Activated CD8-positive, alpha-beta T cell treated with anti-CD3 and anti-CD28 coated beads, Interleukin-2, amount 10 ng/mL, durations not matched to agents 7 days and 5 days (primary cell): ENCODE measurements at regions of chr10 and their contacts with region 1.

Region 1: DNA sequence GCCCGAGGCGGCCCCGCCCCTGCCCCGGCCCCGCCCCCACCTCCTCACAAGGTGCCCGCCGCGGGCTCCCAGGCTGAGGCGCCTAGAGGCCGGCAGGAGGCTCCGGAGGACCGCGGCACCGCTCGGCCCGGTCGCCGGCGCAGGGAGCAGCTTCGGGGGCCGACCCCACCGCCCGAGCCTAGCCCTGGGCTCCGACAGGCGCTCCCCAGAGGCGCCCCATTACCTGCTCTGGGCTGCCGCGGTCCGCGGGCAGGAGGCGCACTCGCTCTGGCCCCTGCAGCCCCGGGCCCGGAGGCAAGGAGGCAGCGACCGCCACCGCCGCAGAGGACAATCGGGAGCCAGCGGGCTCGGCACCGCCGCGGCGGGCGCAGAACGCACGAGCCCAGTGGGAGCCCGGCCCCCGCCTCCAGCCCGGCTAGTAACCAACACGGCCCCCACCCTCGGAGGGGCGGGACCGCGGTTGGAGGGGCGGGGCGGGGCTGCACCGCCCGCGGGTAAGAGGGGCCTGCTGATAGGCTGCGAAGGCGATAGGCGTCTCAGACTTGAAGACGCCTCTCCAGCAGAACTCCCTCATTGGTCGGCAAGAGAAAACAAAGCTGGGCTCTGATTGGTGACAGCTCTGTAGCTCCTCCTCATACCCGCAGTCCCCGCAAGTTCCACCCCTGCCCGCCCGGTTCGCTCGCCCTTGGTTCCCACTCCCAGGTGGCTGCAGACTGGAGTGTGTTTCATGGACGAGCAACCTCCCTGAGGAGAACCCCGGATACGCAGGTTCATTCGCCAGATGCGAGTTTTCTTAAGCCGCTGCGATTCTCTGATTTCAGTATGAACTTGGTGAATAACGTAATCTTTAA is at the start of gene MPP7:
- DNase-seq: peak; percentile 96
- ATAC-seq: peak; percentile 98
- H3K4me3 Mint-ChIP-seq: peak within 1 kb of the TSS; percentile 81
- H3K27ac Mint-ChIP-seq: peak within 1 kb of the TSS; percentile 69
- H3K4me1 Mint-ChIP-seq: peaks cover 40% of the 10 kb centered on the region
- H3K27me3 Mint-ChIP-seq: peaks cover 15% of the 10 kb centered on the region
- total RNA-seq, gene MPP7: 13.0 to 13.5 TPM

Region 2: DNA sequence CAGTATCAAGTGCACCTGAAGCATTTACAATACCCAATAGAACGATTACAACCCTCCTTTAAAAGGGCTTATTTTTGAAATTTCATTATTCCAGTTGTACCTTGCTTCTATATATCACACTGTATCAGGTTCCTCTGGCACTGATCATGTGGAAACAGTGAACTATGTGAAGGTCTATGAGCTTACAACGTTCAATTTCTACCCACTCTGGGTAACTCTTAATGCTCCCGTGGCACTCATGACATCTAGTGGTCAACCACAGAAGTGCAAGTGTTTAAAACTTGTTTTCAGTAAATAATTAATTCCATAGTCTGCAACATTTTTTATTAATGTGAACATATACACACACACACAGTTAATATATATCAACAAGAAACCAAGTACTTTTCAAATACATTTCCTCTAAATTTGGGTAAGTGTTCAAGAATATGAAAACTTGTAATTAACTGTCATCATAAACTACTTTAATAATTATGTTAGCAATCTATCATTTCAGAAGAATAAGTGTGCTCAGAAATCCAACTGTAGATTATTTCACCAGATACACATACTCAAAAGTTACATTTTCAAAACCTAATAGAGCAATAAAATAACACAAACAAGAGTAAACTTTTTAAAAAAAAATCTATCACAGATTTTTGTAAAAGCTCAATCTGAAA is 61.0 kb before region 1 on chr10:
- CTCF ChIA-PET with region 1: interaction called, 17 read pairs
- POLR2A ChIA-PET with region 1: no interaction called
- DNase-seq: peak; percentile 60
- ATAC-seq: peak; percentile 57
- H3K4me3 Mint-ChIP-seq: no peak overlapping the region
- H3K27ac Mint-ChIP-seq: no peak overlapping the region
- H3K4me1 Mint-ChIP-seq: peaks cover 11% of the 10 kb centered on the region
- H3K27me3 Mint-ChIP-seq: no peaks in the 10 kb centered on the region

Region 3: GRCh38 chr10:28291881-28292297 is 11.0 kb before region 1 on chr10:
- CTCF ChIA-PET with region 1: interaction called, 18 read pairs
- POLR2A ChIA-PET with region 1: interaction called, 3 read pairs
- DNase-seq: no peak
- ATAC-seq: no peak
- H3K4me3 Mint-ChIP-seq: no peak overlapping the region
- H3K27ac Mint-ChIP-seq: no peak overlapping the region
- H3K4me1 Mint-ChIP-seq: peaks cover 17% of the 10 kb centered on the region
- H3K27me3 Mint-ChIP-seq: no peaks in the 10 kb centered on the region

Region 4: GRCh38 chr10:28326516-28327490 is 23.9 kb after region 1 on chr10:
- CTCF ChIA-PET with region 1: interaction called, 183 read pairs
- POLR2A ChIA-PET with region 1: interaction called, 6 read pairs
- DNase-seq: no peak
- ATAC-seq: no peak
- H3K4me3 Mint-ChIP-seq: no peak overlapping the region
- H3K27ac Mint-ChIP-seq: no peak overlapping the region
- H3K4me1 Mint-ChIP-seq: peaks cover 36% of the 10 kb centered on the region
- H3K27me3 Mint-ChIP-seq: no peaks in the 10 kb centered on the region

Region 5: DNA sequence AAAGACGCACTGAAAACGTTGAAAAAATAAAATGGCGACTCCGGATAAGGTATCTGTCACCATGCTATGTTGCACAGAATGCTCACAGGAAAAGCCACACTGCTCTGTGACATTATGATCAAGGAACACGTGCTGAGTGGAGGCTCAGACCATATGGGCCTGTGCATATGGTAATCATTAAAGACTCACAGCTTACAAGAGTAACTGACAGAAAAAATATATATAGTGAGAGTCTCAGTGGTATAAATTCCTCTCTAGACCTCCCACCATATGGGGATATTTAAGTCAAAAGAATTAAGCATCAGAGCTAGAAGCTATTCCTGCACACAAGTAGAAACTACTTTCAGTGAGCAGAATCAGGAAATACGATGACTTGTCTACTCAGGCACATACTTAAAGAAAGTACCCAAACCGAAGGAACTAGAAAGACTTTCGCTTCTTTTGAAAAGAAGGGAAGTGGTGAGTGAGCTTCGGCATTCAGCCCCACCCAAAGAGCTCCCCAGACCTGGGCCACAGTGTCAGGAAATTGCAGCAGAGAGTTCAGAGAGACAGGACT is 65.1 kb after region 1 on chr10:
- CTCF ChIA-PET with region 1: interaction called, 71 read pairs
- POLR2A ChIA-PET with region 1: interaction called, 18 read pairs
- DNase-seq: peak; percentile 85
- ATAC-seq: peak; percentile 97
- H3K4me3 Mint-ChIP-seq: peak overlapping the region; percentile 57
- H3K27ac Mint-ChIP-seq: peak overlapping the region; percentile 93
- H3K4me1 Mint-ChIP-seq: peaks cover 46% of the 10 kb centered on the region
- H3K27me3 Mint-ChIP-seq: no peaks in the 10 kb centered on the region

Region 6: GRCh38 chr10:28393966-28394568 is 91.2 kb after region 1 on chr10:
- CTCF ChIA-PET with region 1: interaction called, 20 read pairs
- POLR2A ChIA-PET with region 1: no interaction called
- DNase-seq: peak; percentile 79
- ATAC-seq: peak; percentile 95
- H3K4me3 Mint-ChIP-seq: no peak overlapping the region
- H3K27ac Mint-ChIP-seq: no peak overlapping the region
- H3K4me1 Mint-ChIP-seq: peaks cover 4% of the 10 kb centered on the region
- H3K27me3 Mint-ChIP-seq: peaks cover 5% of the 10 kb centered on the region